Aorta (tissue), 5 donors: ENCODE measurements at regions of chr2 and their contacts with region 1.

Region 1: GRCh38 chr2:169109502-169110409 is 40.4 kb downstream of the DHRS9 start:
- DNase-seq: peak; percentile 79 to 83
- ATAC-seq: peak; percentile 72
- H3K4me3 ChIP-seq: no peak overlapping the region
- H3K27ac ChIP-seq: no peak overlapping the region
- H3K4me1 ChIP-seq: no peaks in the 10 kb centered on the region
- H3K27me3 ChIP-seq: peaks cover 0 to 3% of the 10 kb centered on the region in 2 donors

Region 2: DNA sequence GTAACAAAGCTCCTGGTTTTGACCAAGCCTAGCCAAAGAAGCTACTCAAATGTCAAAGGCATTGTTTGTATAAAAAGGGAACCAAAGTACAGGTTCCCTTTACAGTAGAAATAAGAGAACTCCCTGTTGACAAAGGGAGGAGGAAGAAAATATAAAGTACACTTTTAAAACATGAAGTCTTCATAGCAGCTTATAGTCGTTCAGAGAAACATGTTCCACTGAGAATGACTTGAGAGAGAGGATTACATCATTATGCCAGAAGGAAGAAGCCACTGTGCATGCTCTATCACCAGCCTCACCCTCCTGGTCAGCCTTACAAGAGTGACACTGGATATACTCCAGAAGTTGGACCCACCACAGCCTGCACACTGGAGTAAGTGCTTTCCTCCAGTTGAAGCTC is 42.9 kb before region 1 on chr2:
- intact Hi-C with region 1: no loop called
- DNase-seq: no peak
- ATAC-seq: no peak
- H3K4me3 ChIP-seq: no peak overlapping the region
- H3K27ac ChIP-seq: no peak overlapping the region
- H3K4me1 ChIP-seq: no peaks in the 10 kb centered on the region
- H3K27me3 ChIP-seq: peaks cover 0 to 1% of the 10 kb centered on the region in 2 donors

Region 3: DNA sequence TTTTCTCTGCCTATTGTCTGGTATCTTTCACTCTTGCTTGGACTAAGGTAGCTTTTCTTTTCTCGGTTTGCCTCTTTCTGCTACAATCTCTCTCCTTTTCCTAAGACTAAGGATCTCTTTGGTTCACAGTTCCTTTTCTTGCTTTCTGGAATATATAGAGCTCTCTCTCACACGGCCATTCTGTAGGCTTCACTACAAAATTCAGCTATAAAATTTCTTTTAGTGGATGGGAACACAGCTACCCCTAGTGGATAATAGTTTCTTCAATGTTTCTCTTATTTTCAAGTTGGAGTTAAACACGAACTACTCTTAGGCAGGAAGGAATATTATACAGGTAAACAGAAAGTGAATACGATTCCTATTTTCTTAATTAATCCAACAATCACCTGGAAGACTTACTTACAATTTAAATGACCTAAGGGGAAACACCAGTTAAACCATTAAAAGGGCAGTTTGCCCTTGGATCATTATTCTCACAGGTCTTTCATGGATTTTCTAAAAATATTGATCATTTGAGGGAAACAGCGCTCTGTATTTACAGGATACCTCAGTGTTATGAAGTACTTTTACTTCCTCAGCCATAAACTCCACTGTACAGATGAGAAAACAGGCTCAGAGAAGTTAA is 112.1 kb after region 1 on chr2:
- intact Hi-C with region 1: loop called in 1 of 2 experiments (anchors 5 kb)
- DNase-seq: no peak
- ATAC-seq: no peak
- H3K4me3 ChIP-seq: no peak overlapping the region
- H3K27ac ChIP-seq: no peak overlapping the region
- H3K4me1 ChIP-seq: no peaks in the 10 kb centered on the region
- H3K27me3 ChIP-seq: no peaks in the 10 kb centered on the region

Region 4: GRCh38 chr2:169275696-169276444 is 166.1 kb after region 1 on chr2:
- intact Hi-C with region 1: loop called in 1 of 2 experiments (anchors 10 kb)
- DNase-seq: no peak
- ATAC-seq: no peak
- H3K4me3 ChIP-seq: no peak overlapping the region
- H3K27ac ChIP-seq: no peak overlapping the region
- H3K4me1 ChIP-seq: peaks cover 0 to 2% of the 10 kb centered on the region in 2 donors
- H3K27me3 ChIP-seq: no peaks in the 10 kb centered on the region

Region 5: DNA sequence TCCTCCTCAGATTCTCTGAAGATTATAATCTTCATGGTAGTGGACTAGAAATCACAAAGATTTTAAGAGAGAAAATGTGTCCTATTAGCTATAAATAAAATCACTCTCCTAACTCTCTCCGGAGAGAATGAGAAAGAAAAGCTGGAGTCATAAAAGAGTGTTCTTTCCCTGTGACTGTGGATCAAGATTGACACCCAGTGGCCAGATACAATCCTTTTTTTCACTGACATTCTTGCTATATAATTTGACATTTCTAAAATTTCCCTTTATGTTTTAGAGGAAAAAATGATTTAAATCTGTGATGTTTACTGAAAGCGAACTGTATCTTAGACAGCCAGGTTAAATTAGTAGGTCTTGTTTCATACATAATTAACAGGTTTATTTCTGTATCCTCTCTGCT is 287.9 kb after region 1 on chr2:
- intact Hi-C with region 1: loop called in 1 of 2 experiments (anchors 10 kb)
- DNase-seq: no peak
- ATAC-seq: no peak
- H3K4me3 ChIP-seq: no peak overlapping the region
- H3K27ac ChIP-seq: no peak overlapping the region
- H3K4me1 ChIP-seq: no peaks in the 10 kb centered on the region
- H3K27me3 ChIP-seq: no peaks in the 10 kb centered on the region